H1 (cell line): ENCODE measurements at regions of chr3 and their contacts with region 1.

Region 1: DNA sequence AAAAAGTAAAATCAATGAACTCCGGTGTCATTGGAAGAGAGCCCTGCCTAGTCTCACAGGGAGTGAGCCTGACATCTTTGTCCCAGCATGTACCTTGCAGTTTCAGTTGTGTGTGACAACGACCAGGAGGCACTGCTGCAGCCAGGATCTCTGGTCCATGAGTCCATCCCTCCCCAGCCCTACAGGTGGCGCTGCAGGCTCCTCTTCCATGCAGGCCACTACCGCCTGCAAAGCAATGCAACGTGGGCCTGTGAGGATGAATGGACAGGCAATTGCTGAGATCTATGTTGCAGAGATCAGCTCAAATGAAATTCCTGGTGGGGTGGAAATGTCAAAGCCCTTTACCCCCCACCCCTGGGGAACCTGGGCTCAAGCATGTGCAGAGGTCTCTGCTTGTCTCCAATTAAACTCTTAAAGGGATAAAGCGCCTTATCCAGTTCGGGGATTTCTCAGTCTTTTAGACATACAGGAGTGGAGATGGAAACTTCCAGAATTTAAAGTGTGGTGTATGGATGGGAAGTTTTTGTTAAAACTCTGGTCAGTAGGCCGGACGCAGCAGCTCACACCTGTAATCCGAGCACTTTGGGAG is 35.8 kb downstream of the TKT start:
- DNase-seq: peak; percentile 78 to 97
- H3K4me3 ChIP-seq: no peak overlapping the region
- H3K27ac ChIP-seq: no peak overlapping the region
- H3K4me1 ChIP-seq: peaks cover 0 to 2% (median 0%) of the 10 kb centered on the region in 4 experiments; a peak in 1 of 7 replicates
- H3K27me3 ChIP-seq: no peaks in the 10 kb centered on the region
- CTCF ChIP-seq: peak in 2 of 3 experiments; percentile 97 to 98; a peak in 3 of 4 replicates
- EP300 ChIP-seq: no peak
- POLR2A ChIP-seq: peak in 1 of 2 experiments; percentile 27; a peak in 1 of 3 replicates
- RAD21 ChIP-seq: peak; percentile 85 to 89

Region 2: DNA sequence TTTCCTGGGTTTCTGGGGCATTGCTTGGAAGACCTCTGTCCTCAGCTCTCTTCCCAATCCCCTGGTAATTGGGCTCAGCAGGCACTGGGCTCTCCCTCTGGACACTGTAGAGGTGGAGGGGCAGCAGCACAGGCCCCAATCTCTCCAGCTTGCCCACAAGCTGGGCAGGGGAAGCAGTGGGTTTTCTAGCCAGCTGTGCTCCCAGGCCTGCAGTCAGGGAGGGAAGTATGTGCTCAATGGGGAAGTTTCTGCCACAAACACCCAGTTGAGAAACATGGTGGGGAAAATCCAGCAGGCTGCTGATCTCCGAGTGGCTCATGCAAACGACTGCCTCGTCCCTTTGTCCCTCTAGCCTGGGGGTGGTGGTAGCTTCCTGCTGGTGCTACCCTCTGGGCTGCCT is 77.0 kb before region 1 on chr3:
- CTCF ChIA-PET with region 1: no interaction called
- POLR2A ChIA-PET with region 1: no interaction called
- DNase-seq: no peak
- H3K4me3 ChIP-seq: no peak overlapping the region
- H3K27ac ChIP-seq: no peak overlapping the region
- H3K4me1 ChIP-seq: no peaks in the 10 kb centered on the region; a peak in 1 of 7 replicates
- H3K27me3 ChIP-seq: no peaks in the 10 kb centered on the region
- CTCF ChIP-seq: no peak
- EP300 ChIP-seq: no peak
- POLR2A ChIP-seq: no peak
- RAD21 ChIP-seq: no peak

Region 3: DNA sequence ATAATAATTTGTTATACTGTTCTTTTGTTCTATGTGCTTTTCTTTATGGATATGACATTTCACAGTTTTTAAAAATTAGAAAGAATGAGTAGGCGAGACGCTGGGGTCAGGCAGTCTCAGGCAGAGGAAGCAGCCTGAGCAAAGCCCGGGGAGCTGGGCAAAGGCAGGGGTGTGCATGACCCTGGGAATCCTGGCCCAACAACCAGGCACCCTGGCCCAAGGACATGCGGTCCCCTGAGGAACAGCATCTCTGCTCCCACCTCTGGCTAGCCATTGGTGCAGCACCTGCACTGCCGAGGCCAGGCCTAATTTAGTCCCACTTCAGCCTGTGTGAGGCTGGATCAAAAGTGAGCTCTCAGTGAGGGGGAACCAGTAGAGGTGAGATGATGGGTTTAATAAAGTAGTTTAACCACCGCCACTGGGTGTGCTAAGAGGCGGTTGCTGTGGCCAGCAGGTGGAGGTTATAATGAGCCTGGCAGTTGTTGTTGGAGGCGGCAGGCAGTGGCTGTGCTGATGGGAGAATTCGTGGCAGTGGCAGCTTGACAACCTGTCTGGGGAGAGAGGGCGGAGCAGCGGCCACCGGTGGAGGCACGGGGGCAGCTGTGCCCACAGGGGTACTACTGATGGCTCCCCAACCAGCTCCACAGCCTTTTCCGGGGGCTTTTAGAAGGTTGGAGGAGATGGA is 17.5 kb before region 1 on chr3:
- CTCF ChIA-PET with region 1: interaction called, 12 read pairs
- POLR2A ChIA-PET with region 1: interaction called, 12 read pairs
- DNase-seq: no peak
- H3K4me3 ChIP-seq: no peak overlapping the region
- H3K27ac ChIP-seq: no peak overlapping the region
- H3K4me1 ChIP-seq: no peaks in the 10 kb centered on the region; a peak in 1 of 7 replicates
- H3K27me3 ChIP-seq: no peaks in the 10 kb centered on the region
- CTCF ChIP-seq: peak in 1 of 3 experiments; percentile 3; a peak in 1 of 4 replicates
- EP300 ChIP-seq: no peak
- POLR2A ChIP-seq: no peak
- RAD21 ChIP-seq: no peak

Region 4: DNA sequence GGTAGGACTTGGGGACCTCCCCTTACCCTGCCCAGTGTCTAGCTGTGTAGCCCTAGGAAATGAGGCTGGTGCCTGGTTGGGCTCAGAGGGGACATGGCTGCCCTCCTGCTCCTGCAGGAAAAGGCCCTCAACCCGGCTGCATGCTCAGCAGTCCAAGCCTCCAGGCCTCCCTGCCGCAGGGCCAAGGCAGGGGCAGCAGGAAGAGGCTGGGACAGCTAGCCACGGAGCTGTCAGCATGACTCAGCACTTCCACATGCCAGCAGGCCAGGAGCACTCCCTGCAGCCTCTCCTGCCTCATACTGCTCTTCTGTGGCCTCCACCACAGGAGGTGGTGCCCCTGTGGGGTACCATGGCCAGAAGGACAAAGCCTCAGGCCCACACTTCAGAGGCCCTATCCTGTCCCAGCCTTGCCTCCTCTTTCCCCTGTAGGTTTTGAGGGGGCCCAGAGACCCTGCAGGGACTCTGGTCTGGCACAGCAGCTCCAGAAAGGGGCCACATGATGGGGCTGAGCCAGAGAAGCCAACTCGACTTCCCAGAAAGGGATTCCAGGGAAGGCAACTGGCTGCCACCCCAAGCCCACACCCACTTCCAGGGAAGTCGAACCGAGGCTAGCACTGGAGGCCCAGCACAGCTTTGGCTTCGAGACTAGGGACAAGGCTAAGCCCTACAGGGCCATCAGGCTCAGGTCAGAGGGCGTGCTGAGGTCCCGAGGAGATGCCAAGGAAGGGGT is 16.3 kb after region 1 on chr3:
- CTCF ChIA-PET with region 1: interaction called, 68 read pairs
- POLR2A ChIA-PET with region 1: interaction called, 449 read pairs
- DNase-seq: no peak
- H3K4me3 ChIP-seq: no peak overlapping the region
- H3K27ac ChIP-seq: peak overlapping the region; percentile 71
- H3K4me1 ChIP-seq: peaks cover 0 to 7% (median 3%) of the 10 kb centered on the region in 4 experiments; a peak in 5 of 7 replicates
- H3K27me3 ChIP-seq: no peaks in the 10 kb centered on the region
- CTCF ChIP-seq: no peak
- EP300 ChIP-seq: no peak
- POLR2A ChIP-seq: peak in 1 of 2 experiments; percentile 16; a peak in 1 of 3 replicates
- RAD21 ChIP-seq: no peak

Region 5: GRCh38 chr3:53243165-53243564 is 23.2 kb after region 1 on chr3:
- CTCF ChIA-PET with region 1: interaction called, 68 read pairs
- POLR2A ChIA-PET with region 1: interaction called, 449 read pairs
- DNase-seq: no peak
- H3K4me3 ChIP-seq: no peak overlapping the region
- H3K27ac ChIP-seq: no peak overlapping the region
- H3K4me1 ChIP-seq: peaks cover 4 to 21% (median 16%) of the 10 kb centered on the region in 4 experiments
- H3K27me3 ChIP-seq: no peaks in the 10 kb centered on the region
- CTCF ChIP-seq: peak in 1 of 3 experiments; percentile 10; a peak in 2 of 4 replicates
- EP300 ChIP-seq: no peak
- POLR2A ChIP-seq: no peak
- RAD21 ChIP-seq: peak; percentile 28 to 41; a peak in 2 of 4 replicates

Region 6: GRCh38 chr3:53347261-53348064 is 127.5 kb after region 1 on chr3 and contains the start of gene DCP1A:
- CTCF ChIA-PET with region 1: interaction called, 9 read pairs
- POLR2A ChIA-PET with region 1: interaction called, 10 read pairs
- DNase-seq: peak; percentile 91 to 98
- H3K4me3 ChIP-seq: peak within 1 kb of the TSS; percentile 78 to 99 (median 92)
- H3K27ac ChIP-seq: peak within 1 kb of the TSS; percentile 91
- H3K4me1 ChIP-seq: peaks cover 0 to 2% (median 0%) of the 10 kb centered on the region in 4 experiments; a peak in 2 of 7 replicates
- H3K27me3 ChIP-seq: no peaks in the 10 kb centered on the region
- CTCF ChIP-seq: no peak
- EP300 ChIP-seq: peak in 1 of 2 experiments; percentile 93; a peak in 2 of 3 replicates
- POLR2A ChIP-seq: peak; percentile 90 to 95; a peak in 2 of 3 replicates
- RAD21 ChIP-seq: peak in 1 of 2 experiments; percentile 13; a peak in 2 of 4 replicates
- total RNA-seq, gene DCP1A: 15.1 and 15.9 TPM in 2 replicates